ENCODE measurements at regions of chr1 and their contacts with region 1.

Region 1: GRCh38 chr1:227482023-227482299 is 81.4 kb upstream of the ZNF678 start:
- DNase-seq: no peak
- H3K4me3 ChIP-seq: no peak overlapping the region
- H3K27ac ChIP-seq: no peak overlapping the region
- H3K4me1 ChIP-seq: no peaks in the 10 kb centered on the region
- H3K27me3 ChIP-seq: no peaks in the 10 kb centered on the region
- CTCF ChIP-seq: no peak
- POLR2A ChIP-seq: no peak

Region 2: GRCh38 chr1:227299241-227299627 is 182.7 kb before region 1 on chr1:
- intact Hi-C with region 1: no loop called
- DNase-seq: no peak
- H3K4me3 ChIP-seq: peak overlapping the region in 1 of 4 donors; percentile 9
- H3K27ac ChIP-seq: peak overlapping the region in 4 of 5 donors; percentile 41 to 67 (median 52)
- H3K4me1 ChIP-seq: peaks cover 18 to 20% of the 10 kb centered on the region in 2 donors
- H3K27me3 ChIP-seq: no peaks in the 10 kb centered on the region
- CTCF ChIP-seq: no peak
- POLR2A ChIP-seq: no peak

Region 3: DNA sequence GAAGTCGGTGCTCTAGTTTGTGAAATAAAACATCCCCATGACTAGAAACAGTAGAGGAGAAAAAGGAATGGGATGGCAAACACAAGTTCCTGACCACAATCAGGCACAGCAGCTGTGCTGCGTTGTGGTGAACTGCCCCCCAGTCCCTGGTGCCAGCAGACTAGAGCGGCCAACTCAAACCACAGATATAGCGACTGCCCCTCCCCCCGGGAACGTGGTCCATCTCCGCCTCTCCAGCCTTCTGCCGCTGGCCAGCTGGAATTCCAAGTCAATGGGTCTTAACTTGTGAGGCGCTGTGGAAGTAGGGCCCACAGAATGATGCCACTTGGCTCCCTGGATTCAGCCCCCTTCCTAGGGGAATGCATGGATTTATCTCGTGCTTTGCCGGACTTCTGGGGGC is 39.8 kb after region 1 on chr1:
- intact Hi-C with region 1: no loop called
- DNase-seq: no peak
- H3K4me3 ChIP-seq: no peak overlapping the region
- H3K27ac ChIP-seq: no peak overlapping the region
- H3K4me1 ChIP-seq: no peaks in the 10 kb centered on the region
- H3K27me3 ChIP-seq: no peaks in the 10 kb centered on the region
- CTCF ChIP-seq: no peak
- POLR2A ChIP-seq: no peak

Region 4: DNA sequence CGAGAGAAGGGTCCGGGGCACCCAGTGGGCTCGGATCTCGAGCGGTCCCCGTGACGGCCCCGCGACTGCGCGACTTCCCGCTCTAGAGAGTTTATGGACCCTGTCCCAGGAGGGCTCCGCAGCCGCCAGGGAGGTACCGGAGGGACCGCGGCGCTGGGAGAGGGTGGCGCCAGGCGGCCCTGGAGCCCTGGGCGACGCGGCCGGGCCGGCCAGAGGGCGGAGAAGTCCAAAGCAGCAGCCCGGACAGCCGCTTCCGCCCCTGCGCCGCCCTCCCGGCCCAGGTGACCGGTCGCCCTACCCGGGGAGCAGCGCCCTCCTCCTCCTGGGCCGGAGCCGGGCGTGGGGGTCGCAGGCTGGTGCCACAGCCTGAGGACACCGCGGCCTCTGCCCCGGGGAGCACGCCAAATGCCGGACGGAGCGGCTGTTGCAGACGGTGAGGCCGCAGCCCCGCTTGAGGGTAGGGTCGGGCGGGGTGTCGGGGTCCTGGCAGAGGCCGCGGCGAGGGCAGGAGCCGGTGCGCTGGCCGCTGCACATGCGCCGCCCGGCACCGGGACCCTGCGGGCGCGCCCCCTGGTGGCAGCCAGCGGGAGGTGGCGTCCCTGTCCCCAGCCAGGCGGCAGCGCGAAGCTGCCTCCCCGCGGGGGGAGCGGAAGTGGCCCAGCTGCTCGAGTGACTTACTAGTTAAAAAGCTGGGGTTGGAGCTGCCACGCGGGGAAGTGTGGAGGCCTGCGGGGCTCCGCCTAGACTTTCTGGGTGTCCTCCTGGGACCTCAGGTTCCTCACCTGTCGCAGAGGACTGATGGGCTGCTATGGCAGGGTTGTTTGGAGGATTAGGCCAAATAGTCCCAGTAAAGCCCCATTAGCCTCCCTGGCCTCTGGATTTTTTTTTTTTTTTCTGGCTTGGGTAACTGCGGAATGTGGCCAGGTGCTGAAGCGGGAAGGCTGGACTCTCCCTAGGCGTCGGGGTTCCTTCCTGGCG is 60.5 kb after region 1 on chr1:
- intact Hi-C with region 1: loop called in 1 of 2 experiments (anchors 5 kb)
- DNase-seq: peak; percentile 87 to 93 (median 90)
- H3K4me3 ChIP-seq: peak overlapping the region in 2 of 4 donors; percentile 89 to 93
- H3K27ac ChIP-seq: peak overlapping the region in 3 of 5 donors; percentile 60 to 80 (median 67)
- H3K4me1 ChIP-seq: peaks cover 5 to 9% of the 10 kb centered on the region in 2 donors
- H3K27me3 ChIP-seq: no peaks in the 10 kb centered on the region
- CTCF ChIP-seq: peak; percentile 51 to 99 (median 82)
- POLR2A ChIP-seq: peak; percentile 24 to 33

Region 5: DNA sequence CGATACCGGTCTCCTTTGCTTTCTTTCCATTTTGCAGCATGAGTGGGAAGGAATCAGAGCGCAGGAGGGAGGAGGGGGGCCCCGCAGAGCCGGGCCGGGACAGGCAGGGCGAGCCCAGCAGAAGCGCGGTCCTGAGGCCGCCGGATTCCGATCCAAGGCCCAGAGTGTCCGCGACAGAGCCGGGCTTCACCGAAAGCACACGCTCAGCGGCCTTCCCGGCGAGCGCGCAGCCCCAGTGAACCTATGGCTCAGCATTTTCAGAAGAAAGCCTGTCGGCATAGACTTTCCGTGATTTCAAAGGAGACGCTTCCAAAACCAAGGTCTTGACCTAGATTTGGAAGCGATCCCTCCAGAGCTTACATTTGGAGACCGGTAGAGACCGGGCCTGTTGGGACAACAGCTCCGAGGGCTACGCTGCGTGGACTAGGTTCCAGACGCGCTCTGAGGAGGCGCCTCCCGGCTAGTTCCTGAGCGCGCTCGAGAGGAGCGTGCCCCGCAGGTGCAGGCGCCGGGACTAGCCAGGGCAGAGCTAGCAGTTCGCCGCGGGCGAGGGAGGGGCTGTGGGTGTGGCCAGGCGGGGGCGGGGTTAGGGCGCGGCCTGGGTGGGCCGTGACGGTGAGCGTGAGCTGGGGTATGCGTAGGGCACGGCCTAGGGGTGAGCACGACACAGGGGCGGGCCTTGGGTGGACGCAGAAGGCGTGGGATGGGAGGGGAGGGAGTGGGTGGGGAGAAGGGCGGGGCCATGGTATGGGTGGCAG is 305.7 kb after region 1 on chr1:
- intact Hi-C with region 1: no loop called
- DNase-seq: peak; percentile 94 to 96 (median 96)
- H3K4me3 ChIP-seq: peak overlapping the region in 2 of 4 donors; percentile 11 to 53
- H3K27ac ChIP-seq: peak overlapping the region; percentile 23 to 81 (median 46)
- H3K4me1 ChIP-seq: peaks cover 12 to 21% of the 10 kb centered on the region in 2 donors
- H3K27me3 ChIP-seq: no peaks in the 10 kb centered on the region
- CTCF ChIP-seq: no peak
- POLR2A ChIP-seq: peak in 1 of 2 donors; percentile 73

Region 6: DNA sequence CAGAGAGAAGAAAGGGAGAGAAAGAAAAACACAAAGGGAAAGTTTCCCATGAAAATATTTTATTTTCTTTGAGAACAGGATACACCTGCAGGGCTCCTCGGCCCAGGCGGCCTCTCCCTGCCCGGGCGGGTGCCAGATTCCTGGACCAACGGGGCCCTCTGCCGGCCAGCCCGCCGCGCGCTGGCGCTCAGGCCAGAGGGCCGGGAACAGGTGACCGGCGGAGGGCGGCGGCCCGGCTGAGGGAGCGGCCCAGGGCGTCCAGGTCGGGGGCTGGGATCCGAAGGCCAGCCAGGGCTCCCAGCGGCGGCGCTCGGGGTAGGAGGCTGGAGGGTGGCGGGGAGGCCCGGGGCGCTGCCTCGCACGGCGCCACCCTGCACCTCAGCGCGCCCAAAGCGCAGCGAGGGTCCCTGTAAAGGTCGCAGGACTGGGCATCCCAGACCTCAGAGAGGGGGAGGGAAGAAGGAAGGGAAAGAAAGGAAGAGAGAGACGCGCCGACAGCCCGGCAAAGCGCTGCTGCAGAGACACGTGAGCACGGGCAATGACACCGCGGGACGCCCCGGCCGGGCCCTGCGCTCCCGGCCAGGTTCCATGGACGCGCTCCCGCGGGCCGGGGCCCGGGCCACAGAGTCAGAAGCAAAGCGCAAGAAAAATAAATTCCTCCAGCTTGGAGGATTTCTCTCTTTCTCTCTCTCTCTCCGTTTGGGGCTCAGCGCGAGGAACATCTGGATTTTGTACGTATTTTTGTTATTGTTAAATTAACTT is 464.8 kb after region 1 on chr1:
- intact Hi-C with region 1: loop called (anchors 5 kb)
- DNase-seq: peak; percentile 77 to 84 (median 84)
- H3K4me3 ChIP-seq: peak overlapping the region in 2 of 4 donors; percentile 9 to 62
- H3K27ac ChIP-seq: peak overlapping the region; percentile 33 to 77 (median 69)
- H3K4me1 ChIP-seq: peaks cover 24 to 28% of the 10 kb centered on the region in 2 donors
- H3K27me3 ChIP-seq: no peaks in the 10 kb centered on the region
- CTCF ChIP-seq: peak; percentile 36 to 85 (median 66)
- POLR2A ChIP-seq: no peak

Measured in adrenal gland (tissue), 19 donors.